ENCODE measurements at regions of chr1 and their contacts with region 1.

Region 1: DNA sequence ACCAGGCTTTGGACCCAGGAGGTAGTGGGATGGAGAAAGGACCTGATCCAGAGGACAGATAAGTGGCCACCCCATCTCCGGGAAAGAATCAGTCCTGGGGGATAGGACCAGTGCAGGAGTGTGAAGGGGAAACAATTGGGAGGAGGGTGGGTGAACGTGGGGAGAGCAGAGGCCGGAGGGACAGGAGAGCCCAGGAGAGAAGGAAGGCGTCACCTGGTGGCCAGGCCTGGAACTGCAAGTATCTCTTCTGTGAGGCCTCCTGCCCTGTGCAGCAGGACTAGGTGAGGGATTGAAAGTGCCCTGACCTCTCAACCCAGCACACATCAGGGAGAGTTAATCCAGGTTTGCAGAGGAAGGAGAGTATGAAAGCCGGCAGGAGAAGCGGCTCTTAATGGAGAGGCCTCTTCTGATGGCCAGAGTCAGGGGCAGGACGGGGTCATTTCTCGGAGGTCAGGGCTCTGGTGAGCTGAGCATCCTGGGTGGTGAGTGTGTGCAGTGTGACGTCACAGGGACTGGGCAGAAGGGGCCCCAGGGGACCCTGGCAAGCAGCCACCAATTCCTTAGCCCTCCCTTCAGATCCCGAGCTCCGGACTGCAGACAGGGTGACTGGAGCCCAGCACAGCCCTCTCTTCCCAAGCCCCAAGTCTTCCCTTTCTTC is 9.2 kb upstream of the LAD1 start:
- DNase-seq: peak; percentile 90
- H3K4me3 Mint-ChIP-seq: no peak overlapping the region
- H3K27ac Mint-ChIP-seq: no peak overlapping the region
- H3K4me1 Mint-ChIP-seq: peaks cover 5% of the 10 kb centered on the region
- H3K27me3 Mint-ChIP-seq: peaks cover 32% of the 10 kb centered on the region
- CTCF ChIP-seq: peak; percentile 100

Region 2: GRCh38 chr1:201376464-201377374 is 31.6 kb before region 1 on chr1:
- CTCF ChIA-PET with region 1: interaction called, 539 read pairs
- POLR2A ChIA-PET with region 1: interaction called, 4 read pairs
- intact Hi-C with region 1: no loop called
- DNase-seq: peak; percentile 80
- H3K4me3 Mint-ChIP-seq: no peak overlapping the region
- H3K27ac Mint-ChIP-seq: no peak overlapping the region
- H3K4me1 Mint-ChIP-seq: no peaks in the 10 kb centered on the region
- H3K27me3 Mint-ChIP-seq: peaks cover 37% of the 10 kb centered on the region
- CTCF ChIP-seq: peak; percentile 67

Region 3: DNA sequence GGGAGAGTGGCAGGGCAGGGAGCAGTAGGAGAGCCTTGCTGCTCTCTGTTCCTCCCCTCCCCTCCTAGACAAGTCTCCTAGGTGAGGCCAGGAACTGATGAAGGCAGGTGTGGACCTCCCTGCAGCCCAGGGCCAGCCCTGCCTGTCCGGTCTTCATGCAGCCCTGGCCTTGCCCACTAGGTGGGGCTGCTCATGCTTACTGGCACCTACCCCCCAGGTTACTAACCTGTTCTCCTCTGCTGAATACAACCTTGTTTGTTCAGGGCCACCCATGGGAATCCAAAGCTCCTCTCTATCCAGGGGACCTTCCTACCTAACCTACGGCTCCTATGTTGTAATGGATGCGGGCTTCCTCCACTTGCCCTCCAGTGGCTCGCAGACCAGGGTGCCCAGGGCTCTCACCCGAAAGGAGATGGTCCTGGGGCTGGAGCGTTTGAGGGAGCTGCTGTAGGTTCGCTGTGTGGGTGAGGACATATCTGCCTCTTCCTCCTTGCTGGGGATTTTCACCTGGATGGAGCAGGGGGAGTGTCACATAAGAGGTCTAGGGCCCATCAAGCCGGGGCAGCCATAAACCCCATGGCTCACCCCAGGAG is 22.9 kb before region 1 on chr1:
- CTCF ChIA-PET with region 1: interaction called, 539 read pairs
- POLR2A ChIA-PET with region 1: interaction called, 4 read pairs
- intact Hi-C with region 1: loop called (anchors 1 kb)
- DNase-seq: peak; percentile 80
- H3K4me3 Mint-ChIP-seq: no peak overlapping the region
- H3K27ac Mint-ChIP-seq: no peak overlapping the region
- H3K4me1 Mint-ChIP-seq: peaks cover 19% of the 10 kb centered on the region
- H3K27me3 Mint-ChIP-seq: no peaks in the 10 kb centered on the region
- CTCF ChIP-seq: peak; percentile 99

Region 4: GRCh38 chr1:201419746-201420607 is 11.7 kb after region 1 on chr1:
- CTCF ChIA-PET with region 1: interaction called, 73 read pairs
- POLR2A ChIA-PET with region 1: interaction called, 3 read pairs
- intact Hi-C with region 1: no loop called
- DNase-seq: no peak
- H3K4me3 Mint-ChIP-seq: no peak overlapping the region
- H3K27ac Mint-ChIP-seq: no peak overlapping the region
- H3K4me1 Mint-ChIP-seq: no peaks in the 10 kb centered on the region
- H3K27me3 Mint-ChIP-seq: peaks cover 37% of the 10 kb centered on the region
- CTCF ChIP-seq: no peak

Region 5: GRCh38 chr1:201447911-201448871 is 39.9 kb after region 1 on chr1:
- CTCF ChIA-PET with region 1: interaction called, 19 read pairs
- POLR2A ChIA-PET with region 1: no interaction called
- intact Hi-C with region 1: no loop called
- DNase-seq: peak; percentile 89
- H3K4me3 Mint-ChIP-seq: no peak overlapping the region
- H3K27ac Mint-ChIP-seq: peak overlapping the region; percentile 36
- H3K4me1 Mint-ChIP-seq: peaks cover 8% of the 10 kb centered on the region
- H3K27me3 Mint-ChIP-seq: no peaks in the 10 kb centered on the region
- CTCF ChIP-seq: peak; percentile 98

Measured in MCF 10A (cell line).